ENCODE measurements at regions of chr1 and their contacts with region 1.

Region 1: GRCh38 chr1:178542560-178543356 is 29.8 kb downstream of the TEX35 start:
- DNase-seq: peak; percentile 90
- ATAC-seq: peak; percentile 92

Region 2: GRCh38 chr1:178664278-178664677 is 121.5 kb after region 1 on chr1:
- intact Hi-C with region 1: no loop called
- DNase-seq: no peak
- ATAC-seq: no peak

Region 3: GRCh38 chr1:178725603-178726517 is 183.1 kb after region 1 on chr1:
- intact Hi-C with region 1: loop called (anchors 10 kb)
- DNase-seq: peak; percentile 82
- ATAC-seq: peak; percentile 82

Region 4: GRCh38 chr1:178749581-178750166 is 206.9 kb after region 1 on chr1:
- intact Hi-C with region 1: loop called (anchors 1 kb)
- DNase-seq: no peak
- ATAC-seq: no peak